ENCODE measurements at regions of chr1 and their contacts with region 1.

Region 1: DNA sequence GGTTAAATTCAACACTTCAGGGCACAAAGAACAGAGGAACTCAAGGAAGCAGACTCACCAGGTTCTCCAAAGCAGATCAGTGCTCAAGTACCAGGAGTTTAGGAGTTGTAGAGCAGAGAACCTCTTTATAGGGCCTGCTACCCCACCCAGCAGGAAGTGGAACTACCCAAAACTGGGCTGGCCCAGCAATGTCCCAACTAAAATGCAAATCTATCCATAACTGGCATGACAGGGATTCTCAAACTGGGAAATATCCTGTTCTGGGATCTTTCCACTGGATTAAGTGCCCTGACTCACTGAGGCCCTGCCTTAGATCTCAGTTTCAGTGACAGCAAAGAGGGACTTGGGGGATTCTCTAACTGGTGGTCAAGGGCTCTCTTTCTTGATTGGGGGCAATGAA is at the start of gene SPRR2E:
- DNase-seq: no peak
- H3K4me3 ChIP-seq: no peak within 1 kb of the TSS
- H3K27ac ChIP-seq: no peak within 1 kb of the TSS
- H3K4me1 ChIP-seq: peaks cover 5% of the 10 kb centered on the region
- H3K27me3 ChIP-seq: no peaks in the 10 kb centered on the region
- CTCF ChIP-seq: no peak
- total RNA-seq, gene SPRR2E: 0.47 TPM in 1 of 2 donors, not detected in the other

Region 2: DNA sequence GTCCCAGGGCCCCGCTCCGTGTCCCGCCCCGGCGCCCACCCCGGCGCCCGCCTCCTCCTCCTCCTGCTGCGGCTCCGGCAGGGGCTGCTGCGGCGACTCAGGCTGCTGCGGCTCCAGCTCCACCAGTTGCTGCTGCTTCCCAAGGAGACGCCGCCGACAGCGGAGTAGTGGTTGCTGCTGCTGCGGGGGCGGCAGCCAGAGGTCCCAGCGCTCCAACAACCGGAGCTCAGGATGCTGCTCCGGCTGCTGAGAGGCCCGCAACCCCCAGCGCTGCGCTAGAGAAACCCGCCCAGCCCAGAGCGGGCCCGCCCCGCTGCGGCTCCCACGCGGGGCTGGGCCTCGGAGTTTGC is 579.0 kb before region 1 on chr1:
- CTCF ChIA-PET with region 1: no interaction called
- dilution Hi-C with region 1: no loop called
- in situ Hi-C with region 1: no loop called
- intact Hi-C with region 1: no loop called
- DNase-seq: peak; percentile 46
- H3K4me3 ChIP-seq: peak overlapping the region; percentile 28 to 40 (median 37)
- H3K27ac ChIP-seq: no peak overlapping the region
- H3K4me1 ChIP-seq: peaks cover 30% of the 10 kb centered on the region
- H3K27me3 ChIP-seq: no peaks in the 10 kb centered on the region
- CTCF ChIP-seq: no peak

Region 3: DNA sequence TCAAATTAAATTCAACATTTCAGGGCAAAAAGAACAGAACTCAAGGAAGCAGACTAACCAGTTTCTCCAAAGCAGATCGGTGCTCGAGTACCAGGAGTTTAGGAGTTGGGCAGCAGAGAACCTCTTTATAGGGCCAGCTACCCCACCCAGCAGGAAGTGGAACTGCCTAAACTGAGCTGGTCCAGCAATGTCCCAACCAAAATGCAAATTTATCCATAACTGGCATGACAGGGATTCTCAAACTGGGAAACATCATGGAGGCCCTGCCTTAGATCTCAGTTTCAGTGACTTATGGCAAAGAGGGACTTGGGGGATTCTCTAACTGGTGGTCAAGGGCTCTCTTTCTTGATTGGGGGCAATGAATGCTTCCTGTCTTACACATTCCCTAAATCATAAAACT is 22.9 kb before region 1 on chr1 and contains the start of gene SPRR2B:
- CTCF ChIA-PET with region 1: no interaction called
- dilution Hi-C with region 1: no loop called
- in situ Hi-C with region 1: no loop called
- intact Hi-C with region 1: loop called (anchors 1 kb)
- DNase-seq: no peak
- H3K4me3 ChIP-seq: no peak within 1 kb of the TSS
- H3K27ac ChIP-seq: no peak within 1 kb of the TSS
- H3K4me1 ChIP-seq: no peaks in the 10 kb centered on the region
- H3K27me3 ChIP-seq: no peaks in the 10 kb centered on the region
- CTCF ChIP-seq: no peak
- total RNA-seq, gene SPRR2B: not detected

Region 4: GRCh38 chr1:153465811-153466636 is 371.6 kb after region 1 on chr1:
- CTCF ChIA-PET with region 1: no interaction called
- dilution Hi-C with region 1: no loop called
- in situ Hi-C with region 1: no loop called
- intact Hi-C with region 1: no loop called
- DNase-seq: peak; percentile 39
- H3K4me3 ChIP-seq: no peak overlapping the region
- H3K27ac ChIP-seq: no peak overlapping the region
- H3K4me1 ChIP-seq: peaks cover 13% of the 10 kb centered on the region
- H3K27me3 ChIP-seq: peaks cover 3% of the 10 kb centered on the region
- CTCF ChIP-seq: peak; percentile 76 to 78